ENCODE measurements at regions of chr18 and their contacts with region 1.

Region 1: GRCh38 chr18:43648002-43648401 is 370.7 kb upstream of the SYT4 start:
- DNase-seq: no peak
- ATAC-seq: no peak
- H3K4me3 ChIP-seq: no peak overlapping the region
- H3K27ac ChIP-seq: no peak overlapping the region
- H3K4me1 ChIP-seq: no peaks in the 10 kb centered on the region
- H3K27me3 ChIP-seq: no peaks in the 10 kb centered on the region
- CTCF ChIP-seq: no peak
- EP300 ChIP-seq: no peak
- POLR2A ChIP-seq: no peak
- RAD21 ChIP-seq: no peak

Region 2: GRCh38 chr18:43634994-43635393 is 13.0 kb before region 1 on chr18:
- CTCF ChIA-PET with region 1: no interaction called
- POLR2A ChIA-PET with region 1: no interaction called
- RAD21 ChIA-PET with region 1: no interaction called
- SMC1A ChIA-PET with region 1: no interaction called
- in situ Hi-C with region 1: no loop called
- intact Hi-C with region 1: loop called (anchors 1 kb)
- DNase-seq: no peak
- ATAC-seq: no peak
- H3K4me3 ChIP-seq: no peak overlapping the region
- H3K27ac ChIP-seq: no peak overlapping the region
- H3K4me1 ChIP-seq: no peaks in the 10 kb centered on the region
- H3K27me3 ChIP-seq: no peaks in the 10 kb centered on the region
- CTCF ChIP-seq: no peak
- EP300 ChIP-seq: no peak
- POLR2A ChIP-seq: no peak
- RAD21 ChIP-seq: no peak

Measured in GM12878 (cell line).